HCT116 (cell line): ENCODE measurements at regions of chr14 and their contacts with region 1.

Region 1: DNA sequence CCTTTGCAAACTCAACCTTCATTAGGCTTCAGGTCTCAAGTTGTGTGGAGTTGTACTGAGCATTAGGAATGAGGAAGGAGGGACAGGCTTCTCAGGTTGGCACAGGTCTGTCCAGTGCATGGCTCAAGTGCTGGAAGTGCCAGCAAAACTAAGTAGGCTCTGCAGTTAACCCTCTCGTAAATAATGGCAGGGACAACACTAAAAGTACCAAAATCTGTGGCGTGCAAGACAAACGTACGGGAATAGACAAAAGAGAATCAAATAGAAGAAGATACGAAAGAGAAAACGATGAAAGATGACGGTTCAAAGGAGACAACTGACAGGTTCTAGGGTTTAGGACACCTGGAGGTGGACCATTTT is 612 bp downstream of the TRAPPC6B start:
- DNase-seq: no peak
- ATAC-seq: 0 out of 2 replicates have a peak, but pooled peaks have one; percentile 13
- H3K4me3 ChIP-seq: peak overlapping the region; percentile 74 to 97
- H3K27ac ChIP-seq: peak overlapping the region; percentile 90
- H3K4me1 ChIP-seq: peaks cover 10 to 27% of the 10 kb centered on the region in 2 experiments; a peak in 3 of 4 replicates
- H3K27me3 ChIP-seq: no peaks in the 10 kb centered on the region
- CTCF ChIP-seq: no peak
- POLR2A ChIP-seq: no peak
- RAD21 ChIP-seq: no peak

Region 2: DNA sequence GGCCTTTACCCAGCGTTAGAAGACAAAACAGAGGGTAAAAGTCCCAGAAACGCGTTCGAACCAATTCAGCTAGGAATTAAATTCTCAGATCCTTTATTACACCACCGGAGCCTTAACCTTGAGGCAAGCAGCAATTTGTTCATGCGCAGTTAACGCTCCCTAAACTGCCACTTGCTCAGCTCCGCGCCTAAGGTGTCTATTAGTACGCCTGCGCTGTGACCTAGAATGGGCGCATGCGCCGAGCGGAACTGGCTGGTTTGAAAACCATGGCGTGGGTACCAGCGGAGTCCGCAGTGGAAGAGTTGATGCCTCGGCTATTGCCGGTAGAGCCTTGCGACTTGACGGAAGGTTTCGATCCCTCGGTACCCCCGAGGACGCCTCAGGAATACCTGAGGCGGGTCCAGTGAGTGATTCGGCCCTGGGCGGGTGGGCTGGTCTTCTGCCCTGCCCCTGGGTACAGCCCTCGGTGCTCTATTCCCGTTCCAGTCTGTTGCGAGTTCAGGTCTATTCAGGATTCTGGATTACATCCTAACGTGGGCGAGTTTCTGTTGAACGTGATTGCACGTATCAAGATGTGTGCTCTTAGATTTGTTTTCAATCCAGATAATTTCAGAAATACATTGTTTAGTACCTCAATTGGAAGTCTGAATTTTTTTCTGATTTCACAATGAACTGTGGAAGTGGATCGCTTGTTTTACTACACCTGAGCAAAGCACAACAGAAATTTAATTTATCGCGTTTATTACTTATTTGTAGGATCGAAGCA is 55.3 kb before region 1 on chr14 and contains the start of gene GEMIN2:
- CTCF ChIA-PET with region 1: interaction called, 4 read pairs
- POLR2A ChIA-PET with region 1: interaction called, 18 read pairs
- RAD21 ChIA-PET with region 1: no interaction called
- intact Hi-C with region 1: loop called (anchors 5 kb)
- DNase-seq: peak; percentile 88
- ATAC-seq: peak; percentile 97
- H3K4me3 ChIP-seq: peak within 1 kb of the TSS; percentile 65 to 84
- H3K27ac ChIP-seq: peak within 1 kb of the TSS; percentile 63
- H3K4me1 ChIP-seq: peaks cover 4 to 16% of the 10 kb centered on the region in 2 experiments; a peak in 3 of 4 replicates
- H3K27me3 ChIP-seq: no peaks in the 10 kb centered on the region
- CTCF ChIP-seq: no peak
- POLR2A ChIP-seq: peak; percentile 96
- RAD21 ChIP-seq: no peak
- total RNA-seq, gene GEMIN2: 27.3 TPM

Region 3: GRCh38 chr14:39157491-39157890 is 12.0 kb before region 1 on chr14:
- CTCF ChIA-PET with region 1: no interaction called
- POLR2A ChIA-PET with region 1: interaction called, 11 read pairs
- RAD21 ChIA-PET with region 1: interaction called in 1 of 2 experiments, 3 read pairs
- intact Hi-C with region 1: no loop called
- DNase-seq: no peak
- ATAC-seq: no peak
- H3K4me3 ChIP-seq: no peak overlapping the region
- H3K27ac ChIP-seq: no peak overlapping the region
- H3K4me1 ChIP-seq: no peaks in the 10 kb centered on the region
- H3K27me3 ChIP-seq: no peaks in the 10 kb centered on the region
- CTCF ChIP-seq: no peak
- POLR2A ChIP-seq: no peak
- RAD21 ChIP-seq: no peak

Region 4: DNA sequence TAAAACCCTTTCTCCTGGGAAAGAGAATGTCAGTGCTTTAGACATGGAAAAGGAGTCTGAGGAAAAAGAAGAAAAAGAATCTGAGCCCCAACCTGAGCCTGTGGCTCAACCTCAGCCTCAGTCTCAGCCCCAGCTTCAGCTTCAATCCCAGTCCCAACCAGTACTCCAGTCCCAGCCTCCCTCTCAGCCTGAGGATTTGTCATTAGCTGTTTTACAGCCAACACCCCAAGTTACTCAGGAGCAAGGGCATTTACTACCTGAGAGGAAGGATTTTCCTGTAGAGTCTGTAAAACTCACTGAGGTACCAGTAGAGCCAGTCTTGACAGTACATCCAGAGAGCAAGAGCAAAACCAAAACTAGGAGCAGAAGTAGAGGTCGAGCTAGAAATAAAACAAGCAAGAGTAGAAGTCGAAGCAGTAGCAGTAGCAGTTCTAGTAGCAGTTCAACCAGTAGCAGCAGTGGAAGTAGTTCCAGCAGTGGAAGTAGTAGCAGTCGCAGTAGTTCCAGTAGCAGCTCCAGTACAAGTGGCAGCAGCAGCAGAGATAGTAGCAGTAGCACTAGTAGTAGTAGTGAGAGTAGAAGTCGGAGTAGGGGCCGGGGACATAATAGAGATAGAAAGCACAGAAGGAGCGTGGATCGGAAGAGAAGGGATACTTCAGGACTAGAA is 11.6 kb after region 1 on chr14:
- CTCF ChIA-PET with region 1: no interaction called
- POLR2A ChIA-PET with region 1: interaction called, 10 read pairs
- RAD21 ChIA-PET with region 1: no interaction called
- intact Hi-C with region 1: no loop called
- DNase-seq: no peak
- ATAC-seq: no peak
- H3K4me3 ChIP-seq: no peak overlapping the region
- H3K27ac ChIP-seq: peak overlapping the region; percentile 15
- H3K4me1 ChIP-seq: peaks cover 5 to 7% of the 10 kb centered on the region in 2 experiments; a peak in 3 of 4 replicates
- H3K27me3 ChIP-seq: no peaks in the 10 kb centered on the region
- CTCF ChIP-seq: no peak
- POLR2A ChIP-seq: no peak
- RAD21 ChIP-seq: no peak